Right ventricle myocardium inferior (tissue), 1 donor: ENCODE measurements at regions of chr2 and their contacts with region 1.

Region 1: DNA sequence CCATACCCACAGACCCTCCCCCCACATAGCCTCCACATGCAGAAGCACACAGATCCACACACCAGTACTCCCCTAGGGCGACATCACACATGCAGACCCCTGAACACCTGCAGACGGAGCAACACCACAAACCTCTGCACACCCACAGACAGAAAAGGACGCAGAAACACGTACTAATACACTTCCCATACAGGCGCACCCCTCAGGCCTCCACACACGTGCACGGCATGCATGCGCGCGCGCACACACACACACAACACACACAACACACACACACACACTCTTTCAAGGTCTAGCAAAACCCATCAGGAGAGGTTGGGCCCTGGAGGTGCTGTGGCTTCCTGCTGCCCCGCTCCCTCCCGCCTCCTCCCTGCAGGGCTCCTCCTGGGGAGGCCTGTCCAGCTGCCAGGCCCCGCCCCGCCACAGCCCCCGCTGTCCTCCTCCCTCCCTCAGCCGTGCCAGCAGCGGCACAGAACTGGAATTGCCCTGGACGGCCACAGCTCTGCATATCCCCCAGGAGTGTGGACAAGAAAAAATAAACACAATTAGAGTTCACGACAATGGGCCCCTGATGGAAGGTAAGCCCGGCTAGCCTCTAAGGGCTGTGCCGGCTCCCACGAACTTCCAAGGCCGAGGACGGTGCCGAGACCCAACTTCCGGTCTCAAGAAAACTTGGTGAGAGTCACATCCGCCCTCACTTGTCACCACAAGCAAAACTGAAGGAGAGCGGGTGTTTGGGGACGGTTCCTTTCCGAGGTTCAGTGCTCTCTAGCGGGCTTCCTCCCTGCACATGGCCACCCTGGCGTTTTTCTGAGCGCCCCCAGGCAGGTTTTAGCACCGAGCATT is 6.8 kb downstream of the ZFP36L2 start:
- DNase-seq: peak; percentile 94
- ATAC-seq: peak; percentile 79

Region 2: DNA sequence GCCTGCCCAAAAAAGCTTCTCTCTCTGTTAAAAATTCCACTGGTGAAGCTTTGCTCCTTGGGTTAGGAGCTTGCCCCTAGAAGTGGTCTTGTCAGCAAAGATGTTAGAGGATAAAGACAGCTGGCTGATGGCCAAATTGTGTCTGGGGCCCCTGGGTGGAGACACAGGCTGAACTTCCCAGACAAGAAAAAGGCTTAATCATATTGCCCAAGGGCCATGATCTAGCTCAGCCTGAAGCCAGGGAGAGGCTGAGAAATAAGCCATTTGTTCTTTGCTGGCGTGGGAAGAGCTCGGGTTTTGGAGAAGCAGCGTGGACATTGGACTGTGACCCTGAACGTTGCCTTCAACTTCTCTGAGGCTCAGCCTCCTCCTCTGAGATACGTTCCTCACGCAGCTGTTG is 146.2 kb before region 1 on chr2:
- intact Hi-C with region 1: loop called (anchors 5 kb)
- DNase-seq: no peak
- ATAC-seq: peak; percentile 62

Region 3: DNA sequence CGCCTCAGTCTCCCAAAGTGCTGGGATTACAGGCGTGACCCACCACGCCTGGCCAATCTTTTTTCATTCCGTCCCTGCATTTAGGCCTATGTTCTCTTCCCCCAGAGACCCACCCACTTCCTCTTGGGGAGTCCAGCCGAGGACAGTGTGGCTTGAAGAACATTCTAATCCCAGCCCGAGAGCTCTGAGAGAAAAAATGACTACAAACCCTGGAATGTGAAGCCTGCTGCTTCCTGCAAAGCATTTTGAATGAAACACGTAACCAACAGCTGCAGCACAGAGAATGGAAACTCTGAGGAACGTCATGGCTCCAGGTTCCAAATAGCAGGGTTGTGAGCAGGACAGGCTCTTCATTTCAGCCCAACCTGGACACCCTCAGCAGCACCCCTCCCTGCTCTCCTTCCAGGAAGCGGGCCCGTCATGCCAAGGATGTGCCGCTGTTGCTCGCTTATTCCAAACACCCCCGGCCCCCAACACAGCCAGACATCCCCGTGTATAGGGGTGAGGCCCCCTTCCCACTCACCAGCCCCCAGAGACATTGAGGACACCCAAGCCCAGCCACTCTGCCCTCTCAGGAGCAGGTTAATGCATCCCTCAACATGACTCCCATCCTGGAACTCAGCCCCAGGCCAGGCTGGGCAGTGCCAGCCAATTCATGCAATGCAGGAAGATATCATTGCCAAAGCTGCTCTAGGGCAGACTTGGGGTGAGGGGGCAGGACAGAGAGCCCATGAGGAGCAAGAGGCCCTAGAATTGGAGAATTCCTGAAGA is 133.0 kb before region 1 on chr2:
- intact Hi-C with region 1: loop called (anchors 5 kb)
- DNase-seq: no peak
- ATAC-seq: peak; percentile 77

Region 4: DNA sequence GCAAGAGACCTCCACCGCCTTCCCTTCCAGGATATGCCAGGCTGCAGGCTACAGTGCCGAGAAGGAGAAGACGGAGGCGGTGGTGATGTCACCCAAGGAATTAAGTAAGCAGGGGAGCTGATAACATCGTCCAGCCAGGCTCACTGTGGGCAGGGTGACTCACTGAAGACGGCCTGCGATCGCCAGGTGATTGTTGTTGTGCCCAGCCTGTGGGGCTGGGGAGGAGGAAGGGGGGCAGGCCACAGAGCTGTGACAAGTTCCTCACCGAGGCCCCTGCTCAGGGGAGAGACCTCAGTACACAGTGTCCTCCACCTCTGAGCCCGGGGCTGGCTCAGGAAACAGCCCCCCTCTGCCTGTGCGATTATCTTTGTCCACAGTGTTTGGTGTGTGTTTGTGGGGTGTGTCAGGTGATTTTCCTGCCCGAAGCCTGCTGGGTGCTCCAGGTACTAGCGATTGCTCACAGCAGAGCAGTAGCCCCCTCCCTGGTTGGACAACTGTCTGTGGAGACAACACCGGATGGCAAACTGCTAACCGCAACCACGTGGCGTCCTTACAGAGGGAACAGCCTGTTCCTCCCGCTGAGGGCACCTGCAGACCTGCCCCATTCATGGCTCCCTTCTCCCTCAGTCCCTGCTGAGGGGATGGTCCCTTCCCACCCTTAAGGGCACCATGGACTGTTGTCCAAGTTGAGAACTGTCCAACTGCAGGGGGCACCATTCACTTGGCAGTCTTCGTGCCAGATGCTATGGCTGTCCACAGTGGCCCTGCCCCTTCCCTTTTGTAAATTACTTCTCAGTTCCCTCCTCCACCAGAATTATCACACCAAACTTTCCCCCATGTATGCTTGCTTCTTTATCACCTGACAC is 88.3 kb before region 1 on chr2:
- intact Hi-C with region 1: loop called (anchors 2 kb)
- DNase-seq: peak; percentile 90
- ATAC-seq: peak; percentile 58

Region 5: GRCh38 chr2:43158259-43158880 is 61.2 kb before region 1 on chr2:
- intact Hi-C with region 1: loop called (anchors 5 kb)
- DNase-seq: peak; percentile 87
- ATAC-seq: peak; percentile 50

Region 6: DNA sequence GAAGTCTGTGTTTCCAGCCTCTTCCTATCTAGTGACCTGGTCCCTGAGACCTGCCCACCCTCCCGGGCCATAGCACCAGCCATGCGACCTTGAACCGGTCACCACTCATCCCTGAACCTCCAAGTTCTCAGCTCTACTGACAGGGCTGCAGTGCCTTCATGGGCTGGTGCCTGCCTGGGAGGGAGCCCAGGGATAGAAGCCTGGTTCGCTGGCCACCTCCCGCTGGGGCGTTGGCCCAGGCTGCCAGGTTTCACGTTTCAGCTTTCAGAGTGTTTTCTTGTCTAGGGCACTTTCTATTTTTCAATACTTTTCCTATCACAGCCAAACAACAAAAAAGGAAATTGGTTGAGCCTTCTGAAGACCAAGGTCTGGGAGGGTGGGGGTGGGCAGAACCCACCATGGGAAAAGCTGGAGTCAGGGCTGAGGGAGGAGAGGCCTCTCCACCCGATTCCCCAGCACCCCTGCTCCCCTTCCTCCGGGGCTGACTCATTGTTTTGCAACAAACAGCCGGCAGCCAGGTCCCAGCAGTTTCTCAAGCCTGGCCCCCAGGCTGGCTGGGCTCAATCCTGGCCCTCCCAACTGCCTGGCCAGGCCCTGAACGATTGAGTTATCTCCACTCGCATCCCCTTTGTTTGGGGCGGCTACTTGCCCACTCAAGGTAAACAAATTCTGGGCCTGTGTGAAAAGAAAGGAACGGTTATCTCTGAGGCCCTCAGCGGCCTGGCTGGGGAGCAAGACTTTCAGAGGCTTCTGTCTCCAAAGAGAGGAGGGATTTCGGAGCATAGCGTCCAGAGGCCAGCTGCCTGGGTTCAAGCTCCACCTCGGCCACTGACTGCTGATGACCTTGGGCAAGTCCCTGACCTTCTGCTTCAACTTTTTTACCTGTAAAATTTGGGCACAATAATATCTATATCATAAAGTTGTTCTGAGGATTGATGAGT is 40.7 kb before region 1 on chr2:
- intact Hi-C with region 1: loop called (anchors 5 kb)
- DNase-seq: peak; percentile 85
- ATAC-seq: peak; percentile 91